GM18951 (cell line): ENCODE measurements at regions of chr17 and their contacts with region 1.

Region 1: GRCh38 chr17:60641810-60642220 is 35.8 kb upstream of the BCAS3 start:
- POLR2A ChIP-seq: no peak

Region 2: DNA sequence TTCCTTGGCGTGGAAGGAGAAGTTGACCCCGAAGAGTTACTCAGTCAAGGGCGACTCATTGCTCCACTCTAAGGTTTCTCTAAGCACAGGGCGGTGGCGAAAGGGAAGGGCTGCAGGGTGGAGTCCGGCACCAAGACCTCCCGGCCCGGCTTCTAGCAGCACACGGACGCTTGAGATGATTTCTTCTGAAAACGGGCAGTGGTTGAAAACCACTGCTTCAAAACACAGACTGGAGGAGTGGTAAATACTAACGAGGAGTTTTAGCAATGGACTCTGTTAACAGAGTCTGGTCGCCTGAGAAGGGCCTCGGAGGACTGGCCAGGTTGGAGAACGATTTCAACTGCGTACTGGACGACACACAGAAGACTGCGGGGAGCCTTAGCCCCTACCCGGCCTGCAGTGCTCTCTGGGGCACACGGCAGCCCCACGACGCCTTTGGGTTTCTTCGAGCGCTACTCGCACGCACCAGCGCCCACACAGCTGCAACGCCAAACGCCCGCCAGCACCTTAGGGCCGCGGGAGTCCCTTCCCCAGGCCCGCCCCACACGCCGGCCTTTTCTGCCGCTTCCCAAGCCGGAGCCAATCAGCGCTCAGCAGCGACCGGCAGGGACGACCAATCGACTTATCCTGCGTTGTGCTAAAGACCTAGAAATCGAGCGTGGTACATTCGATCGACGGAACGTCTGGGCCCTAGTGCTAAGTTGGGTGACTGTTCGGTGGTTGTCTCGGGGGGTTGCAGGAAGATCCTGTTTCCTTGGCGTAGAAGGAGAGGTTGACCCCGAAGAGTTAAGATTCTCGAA is 506.5 kb before region 1 on chr17:
- in situ Hi-C with region 1: loop called (anchors 25 kb)
- POLR2A ChIP-seq: peak; percentile 66

Region 3: GRCh38 chr17:60421273-60421934 is 220.4 kb before region 1 on chr17:
- in situ Hi-C with region 1: loop called (anchors 10 kb)
- POLR2A ChIP-seq: no peak

Region 4: GRCh38 chr17:60827943-60828342 is 186.1 kb after region 1 on chr17:
- in situ Hi-C with region 1: no loop called
- POLR2A ChIP-seq: no peak

Region 5: DNA sequence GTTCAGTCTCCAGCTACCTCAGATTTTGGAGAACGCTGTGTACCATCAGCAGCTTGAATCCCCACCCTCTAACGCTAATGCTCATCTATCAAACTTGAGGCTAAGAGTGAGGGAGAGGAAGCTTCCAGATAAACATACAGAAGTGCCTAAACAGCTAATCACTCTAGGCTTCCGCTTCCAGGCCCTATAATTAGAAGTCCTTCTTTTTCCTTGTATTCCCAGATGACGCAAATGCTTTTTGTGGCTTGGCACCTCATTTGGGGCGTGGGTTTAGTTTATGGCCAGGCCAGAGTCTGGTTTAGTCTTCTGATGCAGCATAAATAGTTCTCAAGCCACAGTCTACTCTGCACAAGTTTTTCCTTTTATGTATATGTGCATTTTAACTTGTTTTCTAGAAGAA is 299.2 kb after region 1 on chr17:
- in situ Hi-C with region 1: no loop called
- POLR2A ChIP-seq: no peak

Region 6: DNA sequence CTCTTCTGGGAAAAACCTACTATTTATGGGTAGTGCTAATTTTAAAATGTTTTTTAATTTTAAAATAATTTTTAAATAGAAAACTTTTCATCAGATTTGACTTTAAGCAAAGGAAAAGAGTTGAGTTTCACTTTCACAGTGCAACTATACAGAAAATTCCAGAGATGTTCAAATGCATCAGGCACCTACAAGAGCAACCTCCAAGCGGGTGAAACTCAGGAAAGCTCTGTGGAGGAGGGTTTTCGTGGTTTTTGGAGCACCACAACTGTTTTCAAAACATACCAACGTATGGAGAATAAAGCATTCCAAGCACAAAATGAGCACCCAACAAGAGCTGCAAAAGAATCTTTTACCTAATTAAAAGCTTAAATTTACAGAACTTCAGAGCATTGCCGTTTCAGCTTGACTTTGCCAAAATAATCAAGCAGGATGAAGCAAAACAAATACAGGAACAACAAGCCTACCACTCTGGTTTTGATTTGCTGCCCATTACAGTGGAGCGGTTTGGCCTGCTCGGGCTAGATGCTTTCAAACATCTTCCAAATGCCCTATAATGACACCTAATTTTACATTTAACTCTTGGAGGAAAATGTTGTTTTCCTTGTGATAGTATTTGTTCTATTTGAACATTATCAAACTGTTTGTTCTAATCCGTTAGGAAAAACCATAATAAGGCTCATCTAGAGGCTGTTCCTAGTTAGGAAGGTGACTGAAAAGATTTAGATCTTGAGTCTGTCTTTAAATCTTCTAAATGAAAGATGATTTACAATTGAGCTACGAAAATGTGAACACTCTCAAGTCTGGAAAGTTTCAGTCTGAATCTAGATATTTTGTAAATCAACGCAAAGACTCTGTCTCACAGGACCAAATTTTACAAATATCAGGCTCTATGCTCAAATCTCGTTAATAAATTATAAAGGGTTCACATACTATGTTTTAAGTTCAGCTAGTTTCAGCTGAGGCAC is 914.7 kb after region 1 on chr17:
- in situ Hi-C with region 1: no loop called
- POLR2A ChIP-seq: no peak